Vagina (tissue), 2 donors: ENCODE measurements at regions of chr4 and their contacts with region 1.

Region 1: DNA sequence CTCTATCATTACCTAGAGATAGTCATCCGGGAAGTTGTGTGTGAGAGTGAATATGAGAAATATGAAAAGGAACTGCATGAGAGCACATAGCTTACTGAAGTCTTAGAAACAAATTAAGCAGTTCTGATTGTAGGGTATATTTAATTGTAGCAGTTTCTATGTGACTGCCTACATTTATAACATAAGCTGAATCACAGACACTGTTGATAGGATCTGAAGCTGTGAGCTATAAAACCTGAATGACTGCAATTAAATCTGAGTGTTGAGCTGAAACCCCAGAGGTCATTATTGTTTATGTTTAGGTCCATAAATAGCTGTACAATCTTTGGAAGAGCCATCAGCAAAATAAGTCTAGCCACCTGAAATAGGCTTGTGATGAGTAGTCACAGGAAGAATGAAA is 210.1 kb upstream of the CXCL13 start:
- DNase-seq: no peak
- H3K4me3 ChIP-seq: no peak overlapping the region
- H3K27ac ChIP-seq: no peak overlapping the region
- H3K4me1 ChIP-seq: no peaks in the 10 kb centered on the region
- H3K27me3 ChIP-seq: no peaks in the 10 kb centered on the region
- CTCF ChIP-seq: no peak
- POLR2A ChIP-seq: no peak

Region 2: DNA sequence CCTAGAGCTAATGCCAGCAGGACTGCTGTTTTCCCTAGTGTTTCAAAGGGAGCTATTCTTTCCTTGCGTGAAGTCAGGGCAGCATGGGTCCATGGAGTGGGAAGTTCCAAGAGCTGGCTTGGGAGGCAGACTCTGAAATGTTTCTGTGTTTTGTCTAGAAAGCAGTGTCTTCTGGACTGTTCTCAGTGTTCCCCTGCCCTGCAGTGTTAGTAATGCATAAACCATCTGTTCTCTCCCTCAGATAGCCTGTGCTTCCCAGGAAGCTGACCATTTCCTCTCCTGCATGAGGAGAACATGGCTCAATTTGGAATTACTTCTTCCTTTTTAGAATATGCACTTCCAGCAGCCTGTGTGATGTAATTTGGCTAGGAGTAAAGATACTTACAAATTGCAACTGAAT is 93.4 kb after region 1 on chr4:
- intact Hi-C with region 1: no loop called
- DNase-seq: no peak
- H3K4me3 ChIP-seq: no peak overlapping the region
- H3K27ac ChIP-seq: no peak overlapping the region
- H3K4me1 ChIP-seq: no peaks in the 10 kb centered on the region
- H3K27me3 ChIP-seq: no peaks in the 10 kb centered on the region
- CTCF ChIP-seq: no peak
- POLR2A ChIP-seq: no peak

Region 3: DNA sequence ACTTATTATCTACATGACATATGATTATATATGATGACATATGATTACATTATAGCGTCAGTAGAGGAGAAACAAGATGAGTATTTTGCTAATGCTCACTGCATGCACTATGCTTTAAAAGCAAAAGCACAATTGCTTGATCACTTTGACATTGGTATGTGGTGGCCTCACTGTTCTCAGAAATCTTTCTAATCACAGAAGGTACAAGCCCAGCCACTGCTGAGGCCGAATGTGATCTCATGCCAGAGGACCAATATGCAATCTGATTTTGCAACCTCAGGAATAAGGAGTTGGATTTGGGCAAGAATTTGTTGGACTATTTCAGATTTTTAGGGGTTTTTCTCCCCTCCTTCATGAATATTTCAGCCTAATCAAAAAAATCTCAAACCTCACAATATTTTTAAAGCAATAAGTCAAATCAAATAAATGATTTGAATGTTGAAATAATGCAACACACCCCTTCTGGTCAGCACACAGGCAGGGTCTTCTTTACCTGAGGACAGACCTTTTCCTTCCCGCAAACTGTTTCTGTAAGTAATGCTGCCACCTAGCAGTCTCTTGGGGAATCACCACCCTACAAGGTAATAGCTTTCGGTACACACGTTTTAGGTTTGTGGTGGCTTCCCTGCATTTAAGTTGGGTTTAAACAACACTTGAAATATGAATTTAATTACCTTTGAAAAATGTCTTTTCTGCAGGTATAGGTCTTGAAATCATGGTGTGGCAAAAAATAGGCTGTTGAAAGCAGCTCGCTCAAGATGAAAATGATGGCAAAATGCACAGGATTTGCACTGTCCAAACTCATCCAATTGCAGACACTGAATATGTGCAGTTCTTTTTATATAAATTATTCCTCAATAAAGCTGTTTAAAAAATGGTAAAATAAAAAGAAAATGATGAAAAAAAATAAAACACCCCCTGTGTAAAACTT is 205.3 kb after region 1 on chr4:
- intact Hi-C with region 1: loop called (anchors 5 kb)
- DNase-seq: no peak
- H3K4me3 ChIP-seq: no peak overlapping the region
- H3K27ac ChIP-seq: no peak overlapping the region
- H3K4me1 ChIP-seq: no peaks in the 10 kb centered on the region
- H3K27me3 ChIP-seq: no peaks in the 10 kb centered on the region
- CTCF ChIP-seq: peak in 2 of 3 experiments; percentile 51 to 72
- POLR2A ChIP-seq: no peak